CD8-positive, alpha-beta T cell (primary cell): ENCODE measurements at regions of chr4 and their contacts with region 1.

Region 1: GRCh38 chr4:82428969-82429727 is 1.1 kb downstream of the HNRNPDL start:
- DNase-seq: peak; percentile 87 to 96 (median 93)
- ATAC-seq: peak; percentile 62
- H3K4me3 ChIP-seq: peak overlapping the region; percentile 91 to 99
- H3K4me3 Mint-ChIP-seq: peak overlapping the region; percentile 100
- H3K27ac ChIP-seq: peak overlapping the region; percentile 99 to 100
- H3K27ac Mint-ChIP-seq: peak overlapping the region; percentile 99
- H3K4me1 ChIP-seq: peaks cover 40% of the 10 kb centered on the region
- H3K4me1 Mint-ChIP-seq: peaks cover 72% of the 10 kb centered on the region
- H3K27me3 ChIP-seq: no peaks in the 10 kb centered on the region
- H3K27me3 Mint-ChIP-seq: no peaks in the 10 kb centered on the region
- CTCF ChIP-seq: peak; percentile 90

Region 2: GRCh38 chr4:82123934-82124333 is 305.2 kb before region 1 on chr4:
- CTCF ChIA-PET with region 1: no interaction called
- POLR2A ChIA-PET with region 1: no interaction called
- intact Hi-C with region 1: no loop called
- DNase-seq: peak in 3 of 9 experiments; percentile 32 to 43 (median 38)
- ATAC-seq: peak; percentile 54
- H3K4me3 ChIP-seq: no peak overlapping the region
- H3K4me3 Mint-ChIP-seq: no peak overlapping the region
- H3K27ac ChIP-seq: no peak overlapping the region
- H3K27ac Mint-ChIP-seq: no peak overlapping the region
- H3K4me1 ChIP-seq: no peaks in the 10 kb centered on the region
- H3K4me1 Mint-ChIP-seq: peaks cover 6% of the 10 kb centered on the region
- H3K27me3 ChIP-seq: no peaks in the 10 kb centered on the region
- H3K27me3 Mint-ChIP-seq: no peaks in the 10 kb centered on the region
- CTCF ChIP-seq: no peak

Region 3: GRCh38 chr4:82149750-82150149 is 279.4 kb before region 1 on chr4:
- CTCF ChIA-PET with region 1: no interaction called
- POLR2A ChIA-PET with region 1: no interaction called
- intact Hi-C with region 1: no loop called
- DNase-seq: no peak
- ATAC-seq: no peak
- H3K4me3 ChIP-seq: no peak overlapping the region
- H3K4me3 Mint-ChIP-seq: no peak overlapping the region
- H3K27ac ChIP-seq: no peak overlapping the region
- H3K27ac Mint-ChIP-seq: no peak overlapping the region
- H3K4me1 ChIP-seq: no peaks in the 10 kb centered on the region
- H3K4me1 Mint-ChIP-seq: peaks cover 12% of the 10 kb centered on the region
- H3K27me3 ChIP-seq: no peaks in the 10 kb centered on the region
- H3K27me3 Mint-ChIP-seq: no peaks in the 10 kb centered on the region
- CTCF ChIP-seq: no peak

Region 4: GRCh38 chr4:82367438-82368097 is 61.6 kb before region 1 on chr4:
- CTCF ChIA-PET with region 1: interaction called, 6 read pairs
- POLR2A ChIA-PET with region 1: interaction called, 38 read pairs
- intact Hi-C with region 1: no loop called
- DNase-seq: peak in 2 of 9 experiments; percentile 27 to 34
- ATAC-seq: peak; percentile 51
- H3K4me3 ChIP-seq: no peak overlapping the region
- H3K4me3 Mint-ChIP-seq: peak overlapping the region; percentile 59
- H3K27ac ChIP-seq: peak overlapping the region in 1 of 2 experiments; percentile 24
- H3K27ac Mint-ChIP-seq: peak overlapping the region; percentile 75
- H3K4me1 ChIP-seq: peaks cover 81% of the 10 kb centered on the region
- H3K4me1 Mint-ChIP-seq: peaks cover 88% of the 10 kb centered on the region
- H3K27me3 ChIP-seq: no peaks in the 10 kb centered on the region
- H3K27me3 Mint-ChIP-seq: no peaks in the 10 kb centered on the region
- CTCF ChIP-seq: no peak

Region 5: DNA sequence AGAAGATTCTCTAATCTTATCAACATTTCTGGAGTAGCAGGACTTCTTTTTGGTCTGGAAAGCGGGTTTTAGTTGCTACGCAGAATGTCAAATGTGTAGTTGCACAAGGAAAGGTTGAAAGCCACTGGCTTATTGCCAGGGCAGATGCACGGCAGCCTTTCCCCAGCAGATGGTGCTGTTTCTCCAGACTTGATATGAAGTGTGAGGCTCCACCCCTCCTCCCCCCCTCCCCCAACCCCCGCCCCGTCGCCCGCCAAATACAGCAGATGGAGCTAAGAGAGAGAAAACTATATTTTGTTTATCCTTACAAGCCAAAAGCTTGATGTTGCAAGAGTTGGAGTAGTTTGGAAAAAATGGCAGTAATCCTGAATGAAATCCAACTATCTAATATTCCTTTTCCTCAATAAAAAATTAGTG is 33.3 kb after region 1 on chr4:
- CTCF ChIA-PET with region 1: no interaction called
- POLR2A ChIA-PET with region 1: interaction called, 3 read pairs
- intact Hi-C with region 1: loop called in 1 of 2 experiments (anchors 1 kb)
- DNase-seq: peak; percentile 68 to 88 (median 84)
- ATAC-seq: peak; percentile 98
- H3K4me3 ChIP-seq: no peak overlapping the region
- H3K4me3 Mint-ChIP-seq: no peak overlapping the region
- H3K27ac ChIP-seq: no peak overlapping the region
- H3K27ac Mint-ChIP-seq: peak overlapping the region; percentile 20
- H3K4me1 ChIP-seq: peaks cover 3% of the 10 kb centered on the region
- H3K4me1 Mint-ChIP-seq: peaks cover 3% of the 10 kb centered on the region
- H3K27me3 ChIP-seq: no peaks in the 10 kb centered on the region
- H3K27me3 Mint-ChIP-seq: no peaks in the 10 kb centered on the region
- CTCF ChIP-seq: peak; percentile 79

Region 6: DNA sequence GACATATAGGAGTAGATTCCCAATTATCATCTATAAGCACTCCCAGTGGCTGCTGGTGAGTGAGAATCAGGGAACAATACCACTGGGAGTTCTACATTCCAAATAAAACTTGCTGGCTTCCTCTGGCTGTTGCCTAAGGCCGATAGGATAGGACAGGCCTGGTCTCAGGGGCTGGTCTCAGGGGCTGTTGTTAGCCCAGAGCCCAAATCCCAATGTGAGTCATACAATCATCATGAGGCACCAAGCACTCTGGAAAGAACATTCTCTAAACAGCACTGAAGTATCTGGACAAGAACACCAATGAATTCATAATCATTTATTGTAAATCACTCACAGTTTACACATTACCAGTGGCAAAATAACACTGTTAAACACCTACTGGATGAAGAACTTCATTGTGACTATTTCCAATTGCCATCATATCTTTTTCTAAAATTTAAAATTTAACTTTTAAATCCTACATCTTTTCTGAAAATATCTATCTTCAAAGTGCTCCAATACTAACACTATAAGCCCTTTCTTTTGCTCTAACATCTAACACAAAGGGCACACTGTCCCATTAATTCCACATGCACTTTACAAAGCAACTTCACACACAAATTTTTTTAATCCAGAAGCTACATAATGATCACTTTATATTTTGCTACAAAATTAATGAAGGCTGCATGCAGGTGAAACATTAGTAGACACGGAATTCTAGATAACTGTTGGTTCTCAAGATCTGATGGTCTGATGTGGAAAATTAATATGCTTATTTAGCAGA is 200.3 kb after region 1 on chr4:
- CTCF ChIA-PET with region 1: no interaction called
- POLR2A ChIA-PET with region 1: no interaction called
- intact Hi-C with region 1: no loop called
- DNase-seq: no peak
- ATAC-seq: no peak
- H3K4me3 ChIP-seq: no peak overlapping the region
- H3K4me3 Mint-ChIP-seq: no peak overlapping the region
- H3K27ac ChIP-seq: no peak overlapping the region
- H3K27ac Mint-ChIP-seq: no peak overlapping the region
- H3K4me1 ChIP-seq: no peaks in the 10 kb centered on the region
- H3K4me1 Mint-ChIP-seq: no peaks in the 10 kb centered on the region
- H3K27me3 ChIP-seq: no peaks in the 10 kb centered on the region
- H3K27me3 Mint-ChIP-seq: no peaks in the 10 kb centered on the region
- CTCF ChIP-seq: no peak

Region 7: GRCh38 chr4:82900331-82901128 is 471.4 kb after region 1 on chr4 and contains the start of gene THAP9:
- CTCF ChIA-PET with region 1: no interaction called
- POLR2A ChIA-PET with region 1: interaction called, 9 read pairs
- intact Hi-C with region 1: loop called in 1 of 2 experiments (anchors 1 kb)
- DNase-seq: peak; percentile 95 to 100 (median 97)
- ATAC-seq: peak; percentile 88
- H3K4me3 ChIP-seq: peak within 1 kb of the TSS; percentile 73 to 84
- H3K4me3 Mint-ChIP-seq: no peak within 1 kb of the TSS
- H3K27ac ChIP-seq: peak within 1 kb of the TSS; percentile 93 to 99
- H3K27ac Mint-ChIP-seq: no peak within 1 kb of the TSS
- H3K4me1 ChIP-seq: peaks cover 30% of the 10 kb centered on the region
- H3K4me1 Mint-ChIP-seq: peaks cover 21% of the 10 kb centered on the region
- H3K27me3 ChIP-seq: no peaks in the 10 kb centered on the region
- H3K27me3 Mint-ChIP-seq: no peaks in the 10 kb centered on the region
- CTCF ChIP-seq: no peak
- total RNA-seq, gene THAP9: 5.2 to 7.3 TPM

Region 8: DNA sequence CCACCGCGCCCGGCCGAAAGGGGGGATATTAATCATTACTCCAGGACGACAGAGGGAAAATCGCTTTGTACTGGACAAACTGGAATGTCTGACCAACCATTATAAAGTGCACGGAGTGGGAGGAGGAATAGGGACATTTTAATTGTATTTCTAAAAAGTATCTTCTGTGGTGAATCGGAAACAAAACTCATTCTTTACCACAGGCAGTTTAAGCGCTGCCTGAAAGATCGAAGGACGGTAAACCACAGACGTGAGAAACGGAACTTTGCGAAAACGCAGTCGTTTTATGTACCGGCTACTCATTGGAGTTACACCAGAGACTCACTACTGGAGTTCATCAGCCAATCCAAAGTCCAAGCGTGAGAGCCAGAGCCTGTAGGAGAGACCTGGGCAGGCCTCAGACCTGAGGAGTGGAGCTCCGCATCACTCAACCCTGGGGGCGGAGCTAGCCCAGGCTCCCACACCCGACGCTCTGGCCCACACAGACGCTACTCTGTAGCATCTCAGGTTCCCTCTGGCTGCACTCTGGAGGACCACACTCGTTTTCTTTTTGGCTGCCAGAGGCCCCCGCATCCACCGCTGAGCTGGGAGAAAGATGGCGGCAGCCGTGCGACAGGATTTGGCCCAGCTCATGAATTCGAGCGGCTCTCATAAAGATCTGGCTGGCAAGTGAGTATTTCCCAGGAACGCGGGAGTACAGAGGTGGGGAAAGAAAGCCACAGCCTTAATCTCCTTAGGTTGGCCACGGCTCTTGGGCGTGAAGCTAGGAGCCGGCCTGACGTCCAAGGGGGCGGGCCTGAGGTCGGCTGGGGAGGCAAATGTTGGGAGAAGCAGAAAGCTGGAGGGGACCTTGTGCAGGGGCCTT is 605.7 kb after region 1 on chr4 and contains the start of gene COPS4:
- CTCF ChIA-PET with region 1: no interaction called
- POLR2A ChIA-PET with region 1: interaction called, 18 read pairs
- intact Hi-C with region 1: loop called in 1 of 2 experiments (anchors 1 kb)
- DNase-seq: peak; percentile 87 to 100 (median 94)
- ATAC-seq: peak; percentile 98
- H3K4me3 ChIP-seq: peak within 1 kb of the TSS; percentile 73 to 90
- H3K4me3 Mint-ChIP-seq: peak within 1 kb of the TSS; percentile 99
- H3K27ac ChIP-seq: peak within 1 kb of the TSS; percentile 76 to 92
- H3K27ac Mint-ChIP-seq: peak within 1 kb of the TSS; percentile 99
- H3K4me1 ChIP-seq: peaks cover 16% of the 10 kb centered on the region
- H3K4me1 Mint-ChIP-seq: peaks cover 41% of the 10 kb centered on the region
- H3K27me3 ChIP-seq: no peaks in the 10 kb centered on the region
- H3K27me3 Mint-ChIP-seq: no peaks in the 10 kb centered on the region
- CTCF ChIP-seq: peak; percentile 51
- total RNA-seq, gene COPS4: 32.2 to 35.2 TPM